ENCODE measurements at regions of chr17 and their contacts with region 1.

Region 1: DNA sequence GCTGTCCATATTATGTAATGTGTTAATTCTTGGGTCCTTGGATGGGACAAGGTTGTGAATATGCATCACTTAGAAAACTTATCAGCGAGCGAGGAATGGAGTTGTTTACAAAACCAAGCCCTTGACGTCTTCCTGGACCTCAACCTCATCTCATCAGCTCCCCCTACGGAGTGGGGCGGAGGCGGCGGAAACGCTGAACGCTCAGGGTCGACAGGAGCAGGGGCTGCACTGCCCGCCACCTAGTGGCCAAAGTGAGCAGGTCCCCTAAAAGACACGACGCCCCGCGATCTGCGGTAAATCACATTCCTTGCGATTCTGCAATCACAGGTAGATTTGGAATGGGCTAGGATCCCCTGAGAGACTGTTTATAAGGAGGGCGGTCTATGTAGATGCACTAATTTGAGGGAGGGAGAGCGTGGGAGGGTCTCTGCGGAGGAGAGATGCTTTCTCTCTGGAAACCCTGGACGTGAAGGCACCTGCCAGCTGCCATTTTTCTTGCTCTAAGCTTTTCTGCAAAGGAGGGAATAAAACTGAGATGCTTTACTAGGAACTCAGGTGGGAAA is 5.4 kb upstream of the ICAM2 start:
- DNase-seq: peak; percentile 91 to 97 (median 95)
- H3K4me3 ChIP-seq: peak overlapping the region; percentile 58
- H3K4me3 Mint-ChIP-seq: peak overlapping the region; percentile 51 to 94 (median 82)
- H3K27ac ChIP-seq: peak overlapping the region; percentile 81
- H3K27ac Mint-ChIP-seq: peak overlapping the region; percentile 94 to 100 (median 98)
- H3K4me1 ChIP-seq: peaks cover 67% of the 10 kb centered on the region
- H3K4me1 Mint-ChIP-seq: peaks cover 51 to 74% (median 70%) of the 10 kb centered on the region in 3 donors
- H3K27me3 ChIP-seq: no peaks in the 10 kb centered on the region
- H3K27me3 Mint-ChIP-seq: peaks cover 0 to under 1% of the 10 kb centered on the region in 2 donors

Region 2: GRCh38 chr17:63904316-63904715 is 121.5 kb before region 1 on chr17:
- CTCF ChIA-PET with region 1: interaction called, 10 read pairs
- POLR2A ChIA-PET with region 1: interaction called, 6 read pairs
- DNase-seq: no peak
- H3K4me3 ChIP-seq: no peak overlapping the region
- H3K4me3 Mint-ChIP-seq: no peak overlapping the region
- H3K27ac ChIP-seq: no peak overlapping the region
- H3K27ac Mint-ChIP-seq: no peak overlapping the region
- H3K4me1 ChIP-seq: no peaks in the 10 kb centered on the region
- H3K4me1 Mint-ChIP-seq: peaks cover 2 to 7% (median 5%) of the 10 kb centered on the region in 3 donors
- H3K27me3 ChIP-seq: no peaks in the 10 kb centered on the region
- H3K27me3 Mint-ChIP-seq: peaks cover 3 to 9% of the 10 kb centered on the region in 2 donors

Region 3: DNA sequence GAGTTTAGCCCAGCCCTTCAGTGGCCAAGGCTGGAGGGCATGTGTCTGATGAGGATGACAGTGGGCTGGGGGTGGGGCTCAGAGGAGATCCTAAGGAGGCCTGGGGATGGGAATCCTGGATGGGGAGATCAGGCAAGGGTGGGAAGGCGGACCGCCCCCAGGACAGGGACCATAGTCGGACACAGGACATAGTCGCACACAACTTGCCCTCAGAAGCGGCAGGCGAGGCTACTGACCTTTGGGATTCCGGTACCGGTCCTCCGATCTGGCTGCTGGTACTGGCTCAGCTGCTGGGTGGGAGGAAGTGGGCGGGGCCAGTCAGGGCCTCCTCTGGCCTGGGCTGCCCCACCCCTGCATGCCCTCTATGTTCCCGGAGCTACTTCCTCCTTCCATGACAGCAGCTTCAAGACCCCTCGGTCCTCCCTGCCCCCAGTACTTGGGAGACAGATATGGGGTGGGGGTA is 94.7 kb before region 1 on chr17:
- CTCF ChIA-PET with region 1: interaction called, 27 read pairs
- POLR2A ChIA-PET with region 1: no interaction called
- DNase-seq: peak; percentile 40 to 74 (median 60)
- H3K4me3 ChIP-seq: peak overlapping the region; percentile 68
- H3K4me3 Mint-ChIP-seq: peak overlapping the region; percentile 75 to 93 (median 90)
- H3K27ac ChIP-seq: peak overlapping the region; percentile 27
- H3K27ac Mint-ChIP-seq: peak overlapping the region; percentile 81 to 96 (median 91)
- H3K4me1 ChIP-seq: peaks cover 24% of the 10 kb centered on the region
- H3K4me1 Mint-ChIP-seq: peaks cover 20 to 30% (median 23%) of the 10 kb centered on the region in 3 donors
- H3K27me3 ChIP-seq: no peaks in the 10 kb centered on the region
- H3K27me3 Mint-ChIP-seq: no peaks in the 10 kb centered on the region

Region 4: GRCh38 chr17:63966646-63967264 is 59.1 kb before region 1 on chr17:
- CTCF ChIA-PET with region 1: interaction called, 12 read pairs
- POLR2A ChIA-PET with region 1: interaction called, 3 read pairs
- DNase-seq: peak in 3 of 5 donors; percentile 26 to 73 (median 67)
- H3K4me3 ChIP-seq: no peak overlapping the region
- H3K4me3 Mint-ChIP-seq: peak overlapping the region in 5 of 7 donors; percentile 1 to 73 (median 11)
- H3K27ac ChIP-seq: no peak overlapping the region
- H3K27ac Mint-ChIP-seq: peak overlapping the region in 5 of 8 donors; percentile 0 to 17 (median 6)
- H3K4me1 ChIP-seq: peaks cover 14% of the 10 kb centered on the region
- H3K4me1 Mint-ChIP-seq: peaks cover 20 to 27% (median 26%) of the 10 kb centered on the region in 3 donors
- H3K27me3 ChIP-seq: no peaks in the 10 kb centered on the region
- H3K27me3 Mint-ChIP-seq: peaks cover 0 to 3% of the 10 kb centered on the region in 2 donors

Region 5: DNA sequence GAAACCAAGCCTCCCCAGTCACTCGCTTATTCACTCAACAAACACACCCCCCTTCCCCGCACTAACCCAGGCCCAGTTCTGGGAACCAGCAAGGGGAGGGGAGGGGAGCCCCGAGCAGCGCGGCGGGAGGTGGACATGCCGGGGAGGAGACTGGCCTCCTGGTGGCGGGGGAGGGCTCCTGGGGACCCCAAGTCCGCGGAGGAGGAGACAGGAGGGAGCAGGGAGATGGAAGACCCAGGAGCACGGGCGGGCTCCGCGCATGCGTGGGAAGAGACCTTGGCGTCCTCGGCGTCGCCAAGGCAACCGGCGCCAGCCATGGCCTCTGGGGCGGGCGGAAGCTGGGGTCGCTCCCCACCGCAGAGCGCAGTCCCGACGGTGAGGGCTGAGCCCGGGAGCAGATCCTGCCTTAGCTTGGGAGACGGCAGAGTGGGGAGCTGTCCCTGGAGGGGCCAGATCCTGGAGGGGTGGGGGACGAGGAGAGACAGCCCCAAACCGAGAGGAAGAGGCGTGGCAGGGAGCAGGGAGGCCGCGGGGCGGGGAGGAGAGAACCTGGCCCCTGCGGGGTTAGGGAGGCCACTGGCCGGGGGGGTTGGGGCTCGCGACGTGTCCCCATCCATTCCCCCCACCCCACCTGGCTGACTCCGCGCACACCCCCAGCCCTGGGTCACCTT is 27.6 kb before region 1 on chr17 and contains the start of gene PRR29:
- CTCF ChIA-PET with region 1: interaction called, 246 read pairs
- POLR2A ChIA-PET with region 1: interaction called, 67 read pairs
- DNase-seq: peak; percentile 68 to 88 (median 77)
- H3K4me3 ChIP-seq: peak within 1 kb of the TSS; percentile 52
- H3K4me3 Mint-ChIP-seq: peak within 1 kb of the TSS; percentile 87 to 96 (median 90)
- H3K27ac ChIP-seq: no peak within 1 kb of the TSS
- H3K27ac Mint-ChIP-seq: peak within 1 kb of the TSS; percentile 50 to 96 (median 90)
- H3K4me1 ChIP-seq: peaks cover 35% of the 10 kb centered on the region
- H3K4me1 Mint-ChIP-seq: peaks cover 44 to 58% (median 56%) of the 10 kb centered on the region in 3 donors
- H3K27me3 ChIP-seq: no peaks in the 10 kb centered on the region
- H3K27me3 Mint-ChIP-seq: no peaks in the 10 kb centered on the region
- total RNA-seq, gene PRR29: 0.24 to 0.51 TPM

Region 6: GRCh38 chr17:64041912-64042311 is 16.1 kb after region 1 on chr17:
- CTCF ChIA-PET with region 1: interaction called, 13 read pairs
- POLR2A ChIA-PET with region 1: no interaction called
- DNase-seq: no peak
- H3K4me3 ChIP-seq: no peak overlapping the region
- H3K4me3 Mint-ChIP-seq: peak overlapping the region in 3 of 7 donors; percentile 7 to 42 (median 29)
- H3K27ac ChIP-seq: no peak overlapping the region
- H3K27ac Mint-ChIP-seq: peak overlapping the region; percentile 23 to 92 (median 77)
- H3K4me1 ChIP-seq: no peaks in the 10 kb centered on the region
- H3K4me1 Mint-ChIP-seq: peaks cover 9 to 34% (median 18%) of the 10 kb centered on the region in 3 donors
- H3K27me3 ChIP-seq: no peaks in the 10 kb centered on the region
- H3K27me3 Mint-ChIP-seq: no peaks in the 10 kb centered on the region

Region 7: DNA sequence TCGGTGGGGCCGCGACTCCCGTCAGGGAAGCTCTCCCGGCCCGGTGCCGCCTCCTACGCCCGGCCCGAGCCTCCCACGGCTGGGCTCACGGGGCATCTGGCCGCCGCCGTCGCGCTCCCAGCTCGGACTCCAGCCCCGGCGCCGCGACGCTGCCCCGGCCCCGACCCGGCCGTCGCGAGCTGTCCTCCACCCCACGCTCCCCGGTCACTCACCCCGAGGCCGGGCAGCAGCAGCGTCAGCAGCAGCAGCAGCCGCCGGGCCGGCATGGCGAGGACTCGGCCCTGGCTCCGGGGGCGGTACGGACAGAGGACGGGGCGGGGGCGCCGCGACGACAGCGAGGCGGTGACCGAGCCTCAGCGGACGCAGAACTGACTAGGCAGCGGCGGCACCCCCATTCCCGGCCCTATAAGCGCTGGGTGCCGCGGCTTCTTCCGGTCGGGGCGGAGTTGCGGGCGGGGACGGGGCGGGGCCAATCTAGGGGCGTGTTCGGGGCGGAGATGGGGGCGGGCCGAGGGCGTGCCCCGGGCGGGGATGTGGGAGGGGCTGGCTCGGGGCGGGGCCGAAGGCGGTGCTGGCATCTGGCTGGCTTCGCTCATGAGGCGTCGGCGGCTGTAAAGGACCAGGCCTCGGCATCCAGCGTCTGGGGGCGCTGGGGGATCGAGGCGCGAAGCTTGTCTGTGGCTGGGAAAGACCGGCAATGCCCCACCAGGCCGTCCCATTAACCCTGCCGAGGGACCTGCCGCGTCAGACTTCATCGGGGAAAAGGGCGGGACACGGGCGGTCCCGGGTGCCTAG is 104.1 kb after region 1 on chr17 and contains the start of gene ERN1:
- CTCF ChIA-PET with region 1: interaction called, 334 read pairs
- POLR2A ChIA-PET with region 1: interaction called, 20 read pairs
- DNase-seq: peak; percentile 87 to 95 (median 88)
- H3K4me3 ChIP-seq: peak within 1 kb of the TSS; percentile 92
- H3K4me3 Mint-ChIP-seq: peak within 1 kb of the TSS; percentile 91 to 98 (median 97)
- H3K27ac ChIP-seq: peak within 1 kb of the TSS; percentile 82
- H3K27ac Mint-ChIP-seq: peak within 1 kb of the TSS; percentile 92 to 98 (median 98)
- H3K4me1 ChIP-seq: peaks cover 32% of the 10 kb centered on the region
- H3K4me1 Mint-ChIP-seq: peaks cover 48 to 63% (median 59%) of the 10 kb centered on the region in 3 donors
- H3K27me3 ChIP-seq: no peaks in the 10 kb centered on the region
- H3K27me3 Mint-ChIP-seq: no peaks in the 10 kb centered on the region
- total RNA-seq, gene ERN1: 24.7 to 25.5 TPM

Measured in CD8-positive, alpha-beta memory T cell (primary cell).